Ascending aorta (tissue), 2 donors: ENCODE measurements at regions of chr22 and their contacts with region 1.

Region 1: DNA sequence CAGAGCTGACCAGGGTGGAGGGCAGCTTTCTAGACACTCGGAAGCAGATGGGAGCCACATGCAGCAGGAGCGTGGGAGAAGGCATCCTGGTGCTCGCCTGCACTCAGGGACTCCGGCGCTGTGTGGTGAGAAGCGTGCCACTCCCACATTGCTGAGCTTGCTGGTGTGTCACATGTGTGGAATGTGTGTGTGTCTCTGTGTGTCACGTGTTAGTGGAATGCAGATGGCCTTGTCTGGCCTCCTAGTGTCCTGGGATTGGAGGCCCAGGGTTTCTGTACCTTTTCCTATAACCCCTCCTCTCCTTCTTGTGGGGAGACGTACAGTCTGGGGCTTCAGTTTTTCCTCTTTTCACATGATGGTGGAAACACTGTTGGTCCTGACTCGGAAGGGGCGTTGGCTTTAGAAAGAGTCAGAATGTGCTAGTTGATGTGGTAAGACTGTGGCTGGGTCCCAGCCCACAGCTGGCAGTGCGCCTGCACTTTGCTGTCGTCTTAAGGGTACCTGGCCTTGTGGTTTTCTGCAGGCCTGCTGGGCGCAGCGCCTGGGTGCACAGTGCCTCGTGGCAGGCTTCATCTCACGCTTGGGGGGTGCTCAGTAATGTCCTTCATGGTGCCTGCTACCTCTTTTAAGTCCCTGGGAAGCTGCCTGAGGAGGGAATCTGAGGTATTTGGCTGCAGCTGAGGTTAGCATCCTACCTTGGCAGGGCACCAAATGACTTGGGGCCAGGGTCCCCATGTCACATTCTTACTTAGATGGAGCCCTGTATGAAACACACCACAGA is 61.8 kb downstream of the MED15 start:
- DNase-seq: peak; percentile 63 to 91
- H3K4me3 ChIP-seq: no peak overlapping the region
- H3K27ac ChIP-seq: peak overlapping the region; percentile 26 to 72
- H3K4me1 ChIP-seq: peaks cover 20 to 27% of the 10 kb centered on the region in 2 donors
- H3K27me3 ChIP-seq: no peaks in the 10 kb centered on the region
- CTCF ChIP-seq: no peak

Region 2: GRCh38 chr22:20531315-20532201 is 37.6 kb before region 1 on chr22:
- intact Hi-C with region 1: loop called (anchors 2 kb)
- DNase-seq: peak; percentile 19 to 85
- H3K4me3 ChIP-seq: peak overlapping the region in 1 of 2 donors; percentile 29
- H3K27ac ChIP-seq: peak overlapping the region; percentile 86 to 94
- H3K4me1 ChIP-seq: peaks cover 29 to 44% of the 10 kb centered on the region in 2 donors
- H3K27me3 ChIP-seq: no peaks in the 10 kb centered on the region
- CTCF ChIP-seq: no peak

Region 3: DNA sequence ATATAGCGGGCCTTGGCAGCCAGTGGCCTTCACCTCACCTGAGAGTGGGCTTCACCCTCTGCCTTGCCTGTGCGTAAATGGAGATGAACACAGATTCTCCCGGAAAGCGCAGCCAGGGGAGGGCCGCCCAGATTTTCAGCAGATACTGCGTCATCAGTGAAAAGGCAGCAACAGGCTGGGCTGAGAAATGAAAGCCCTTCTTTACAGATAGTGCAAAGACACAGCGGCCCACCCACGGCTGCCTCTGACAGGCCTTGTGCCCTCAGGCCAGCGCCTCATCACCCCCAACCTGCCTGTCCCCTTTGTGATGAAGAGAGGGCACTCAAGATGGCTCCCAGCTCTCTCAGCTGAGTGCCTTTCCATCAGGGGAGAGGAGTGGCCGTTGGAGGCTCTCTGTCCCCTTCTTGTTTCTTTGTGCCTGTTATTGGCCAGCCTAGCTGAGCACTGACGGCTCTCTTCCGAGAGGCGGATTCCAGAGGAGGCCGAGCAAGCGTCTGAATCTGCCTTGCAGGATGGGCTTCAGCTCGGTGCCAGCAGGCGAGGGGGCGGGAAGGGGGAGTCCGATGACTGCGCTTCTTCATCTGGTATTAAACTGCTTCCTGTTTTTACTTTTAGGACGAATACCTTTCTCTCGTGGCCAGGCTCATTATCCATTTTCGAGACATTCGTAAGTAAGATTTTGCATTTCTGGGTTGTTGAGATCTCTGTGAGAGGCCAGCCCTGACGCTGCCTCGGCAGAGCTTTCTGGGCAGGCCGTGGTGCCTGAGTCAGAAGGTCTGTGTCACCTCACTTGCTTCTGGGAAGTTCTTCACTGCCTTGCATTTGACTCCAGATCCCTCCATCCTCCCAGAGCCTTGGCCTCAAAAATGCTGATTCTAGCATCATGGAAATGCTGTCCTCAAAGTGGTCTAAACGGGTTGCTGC is 18.1 kb before region 1 on chr22:
- intact Hi-C with region 1: loop called (anchors 1 kb)
- DNase-seq: peak in 1 of 2 donors; percentile 85
- H3K4me3 ChIP-seq: peak overlapping the region in 1 of 2 donors; percentile 23
- H3K27ac ChIP-seq: peak overlapping the region; percentile 95 to 98
- H3K4me1 ChIP-seq: peaks cover 35 to 65% of the 10 kb centered on the region in 2 donors
- H3K27me3 ChIP-seq: no peaks in the 10 kb centered on the region
- CTCF ChIP-seq: no peak